Astrocyte of the cerebellum (primary cell): ENCODE measurements at regions of chr22 and their contacts with region 1.

Region 1: GRCh38 chr22:17678872-17679271 is 40.3 kb downstream of the BCL2L13 start:
- DNase-seq: no peak
- H3K4me3 ChIP-seq: no peak overlapping the region
- CTCF ChIP-seq: no peak

Region 2: GRCh38 chr22:17724678-17725499 is 46.0 kb after region 1 on chr22:
- in situ Hi-C with region 1: loop called (anchors 5 kb)
- DNase-seq: no peak
- H3K4me3 ChIP-seq: no peak overlapping the region
- CTCF ChIP-seq: no peak